Right cardiac atrium (tissue), 5 donors: ENCODE measurements at regions of chr12 and their contacts with region 1.

Region 1: GRCh38 chr12:15590180-15590826 is 198.9 kb downstream of the EPS8 start:
- DNase-seq: peak; percentile 26 to 60 (median 60)
- ATAC-seq: peak; percentile 89 to 91
- H3K4me3 ChIP-seq: peak overlapping the region; percentile 2
- H3K27ac ChIP-seq: no peak overlapping the region
- H3K4me1 ChIP-seq: no peaks in the 10 kb centered on the region
- H3K27me3 ChIP-seq: no peaks in the 10 kb centered on the region

Region 2: GRCh38 chr12:15644700-15645099 is 54.4 kb after region 1 on chr12:
- intact Hi-C with region 1: loop called in 1 of 4 experiments (anchors 10 kb)
- DNase-seq: no peak
- ATAC-seq: no peak
- H3K4me3 ChIP-seq: no peak overlapping the region
- H3K27ac ChIP-seq: no peak overlapping the region
- H3K4me1 ChIP-seq: no peaks in the 10 kb centered on the region
- H3K27me3 ChIP-seq: no peaks in the 10 kb centered on the region

Region 3: DNA sequence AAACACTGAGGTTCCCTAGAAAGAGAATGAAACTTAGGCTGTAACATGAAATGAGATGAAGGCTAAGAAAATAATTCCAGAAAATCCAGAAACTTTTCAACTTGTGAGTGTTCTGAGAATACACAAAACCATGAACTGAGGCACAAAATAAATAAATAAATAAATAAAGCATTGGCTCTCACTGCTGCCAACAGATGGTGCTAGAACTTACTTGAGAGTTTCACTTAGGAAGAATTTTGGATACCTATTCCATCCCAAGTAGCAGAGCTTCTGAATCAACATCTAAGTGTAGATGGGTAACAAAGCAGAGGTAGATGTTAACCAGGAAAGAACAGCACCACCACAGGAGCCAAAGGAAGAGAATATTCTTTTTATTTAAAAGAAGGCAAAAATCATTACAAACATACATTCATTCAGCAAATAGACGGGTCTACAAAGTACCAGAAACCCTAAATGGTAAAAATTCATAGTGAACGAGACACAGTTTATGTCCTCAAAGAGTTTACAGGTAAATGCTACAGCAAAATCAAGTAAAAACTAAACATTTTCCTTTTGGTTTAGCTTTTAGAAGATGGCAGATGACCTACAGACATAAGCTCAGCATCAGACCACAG is 182.2 kb after region 1 on chr12:
- intact Hi-C with region 1: loop called in 1 of 4 experiments (anchors 10 kb)
- DNase-seq: no peak
- ATAC-seq: no peak
- H3K4me3 ChIP-seq: no peak overlapping the region
- H3K27ac ChIP-seq: no peak overlapping the region
- H3K4me1 ChIP-seq: no peaks in the 10 kb centered on the region
- H3K27me3 ChIP-seq: no peaks in the 10 kb centered on the region

Region 4: GRCh38 chr12:15796493-15797141 is 206.3 kb after region 1 on chr12:
- intact Hi-C with region 1: loop called in 1 of 4 experiments (anchors 5 kb)
- DNase-seq: no peak
- ATAC-seq: no peak
- H3K4me3 ChIP-seq: no peak overlapping the region
- H3K27ac ChIP-seq: no peak overlapping the region
- H3K4me1 ChIP-seq: no peaks in the 10 kb centered on the region
- H3K27me3 ChIP-seq: no peaks in the 10 kb centered on the region

Region 5: DNA sequence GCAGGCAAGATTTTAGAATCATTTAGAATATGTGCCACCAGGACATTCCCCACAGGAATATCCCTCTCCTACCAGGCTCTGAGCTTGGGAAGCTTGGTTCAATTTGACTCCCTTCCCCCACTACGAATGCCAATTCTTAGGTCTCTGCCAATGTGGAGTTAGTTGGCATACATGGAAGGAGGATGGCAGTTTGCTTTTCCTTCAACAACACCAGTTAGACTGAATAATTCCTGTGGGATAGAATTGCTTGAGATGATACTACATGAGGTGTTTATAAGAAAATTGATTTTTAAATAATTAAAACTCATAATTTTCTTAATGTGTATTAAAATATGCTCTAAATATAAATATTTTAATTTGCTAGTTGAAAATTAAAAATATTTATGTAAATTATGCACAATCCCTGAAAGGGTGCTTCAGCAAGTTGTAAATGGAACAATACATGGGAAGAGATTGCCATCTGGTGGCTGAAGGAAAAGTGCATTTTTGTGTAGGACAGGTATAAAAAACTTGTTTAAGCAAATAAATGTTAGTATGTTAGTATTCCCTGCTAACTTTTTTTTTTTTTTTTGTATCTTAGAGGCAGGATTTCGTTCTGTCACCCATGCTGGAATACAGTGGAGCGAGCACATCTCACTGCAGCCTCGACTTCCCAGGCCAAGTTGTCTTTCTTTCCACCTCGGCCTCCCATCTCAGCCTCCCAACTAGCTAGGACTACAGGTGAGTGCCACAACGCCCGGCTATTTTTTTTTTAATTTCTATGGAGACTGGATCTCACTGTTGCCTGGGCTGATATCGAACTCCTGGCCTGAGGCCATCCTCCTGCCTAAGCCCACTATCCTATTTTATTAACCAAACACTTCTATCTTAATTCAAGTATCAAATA is 266.0 kb after region 1 on chr12:
- intact Hi-C with region 1: loop called (anchors 2 to 5 kb)
- DNase-seq: no peak
- ATAC-seq: peak; percentile 66 to 68
- H3K4me3 ChIP-seq: no peak overlapping the region
- H3K27ac ChIP-seq: no peak overlapping the region
- H3K4me1 ChIP-seq: no peaks in the 10 kb centered on the region
- H3K27me3 ChIP-seq: no peaks in the 10 kb centered on the region